Breast epithelium (tissue), 4 donors: ENCODE measurements at regions of chr9 and their contacts with region 1.

Region 1: GRCh38 chr9:33297432-33297831 is 7.1 kb downstream of the NFX1 start:
- DNase-seq: no peak
- H3K4me3 ChIP-seq: no peak overlapping the region
- H3K27ac ChIP-seq: no peak overlapping the region
- H3K4me1 ChIP-seq: peaks cover 0 to 23% of the 10 kb centered on the region in 2 donors
- H3K27me3 ChIP-seq: no peaks in the 10 kb centered on the region
- CTCF ChIP-seq: no peak
- POLR2A ChIP-seq: no peak

Region 2: DNA sequence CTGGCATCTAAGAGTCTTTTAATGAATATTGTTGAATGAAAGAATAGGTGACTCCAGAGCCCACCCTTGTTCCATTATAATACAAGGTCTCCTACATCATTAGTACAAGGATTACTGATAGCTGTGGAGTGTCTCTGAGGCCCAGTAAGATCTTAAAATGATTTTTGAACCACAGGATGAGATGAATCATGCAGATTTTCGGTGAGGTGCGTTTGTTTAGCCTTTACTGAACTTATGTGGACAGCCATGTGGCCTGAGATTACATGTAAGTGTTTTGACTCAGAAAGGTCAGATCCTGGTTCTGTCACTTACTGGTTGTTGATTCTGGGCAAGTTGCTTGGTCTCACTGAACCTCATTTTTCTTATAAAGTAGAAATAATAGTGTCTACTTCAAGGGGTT is 14.5 kb after region 1 on chr9:
- intact Hi-C with region 1: loop called (anchors 2 kb)
- DNase-seq: no peak
- H3K4me3 ChIP-seq: no peak overlapping the region
- H3K27ac ChIP-seq: no peak overlapping the region
- H3K4me1 ChIP-seq: no peaks in the 10 kb centered on the region
- H3K27me3 ChIP-seq: no peaks in the 10 kb centered on the region
- CTCF ChIP-seq: no peak
- POLR2A ChIP-seq: no peak

Region 3: GRCh38 chr9:33884856-33885701 is 587.6 kb after region 1 on chr9:
- intact Hi-C with region 1: no loop called
- DNase-seq: no peak
- H3K4me3 ChIP-seq: no peak overlapping the region
- H3K27ac ChIP-seq: no peak overlapping the region
- H3K4me1 ChIP-seq: peaks cover 0 to 5% of the 10 kb centered on the region in 2 donors
- H3K27me3 ChIP-seq: no peaks in the 10 kb centered on the region
- CTCF ChIP-seq: no peak
- POLR2A ChIP-seq: no peak

Region 4: DNA sequence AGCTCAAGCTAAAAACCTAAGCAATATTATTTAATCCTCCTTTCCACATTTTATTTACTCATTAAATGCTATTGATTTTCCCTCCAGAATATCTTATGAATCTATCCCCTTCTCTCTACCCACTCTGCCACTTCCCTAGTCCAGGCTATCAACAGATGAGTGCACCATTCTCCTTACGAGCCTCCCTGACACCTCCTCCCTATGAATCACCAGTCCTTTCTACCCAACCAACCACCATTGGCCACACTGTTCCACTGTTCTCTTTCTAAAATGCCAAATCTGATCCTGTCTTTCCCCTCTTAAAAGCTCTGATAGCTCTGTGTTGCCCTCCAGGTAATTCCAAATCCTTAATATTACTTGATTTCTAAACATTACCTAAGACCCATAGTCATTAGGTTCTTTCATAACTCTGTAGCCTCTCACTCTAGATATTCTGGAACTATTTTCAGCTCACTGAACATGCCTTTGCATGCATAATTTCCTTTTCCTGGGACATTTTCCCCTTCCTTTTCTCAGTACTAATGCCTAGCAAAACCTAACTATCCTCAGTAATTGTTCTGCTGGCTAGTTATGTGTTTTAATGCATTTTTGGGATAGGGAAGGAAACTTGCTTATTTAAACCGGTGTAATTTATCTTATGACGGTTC is 1990.7 kb after region 1 on chr9:
- intact Hi-C with region 1: no loop called
- DNase-seq: no peak
- H3K4me3 ChIP-seq: no peak overlapping the region
- H3K27ac ChIP-seq: no peak overlapping the region
- H3K4me1 ChIP-seq: no peaks in the 10 kb centered on the region
- H3K27me3 ChIP-seq: no peaks in the 10 kb centered on the region
- CTCF ChIP-seq: no peak
- POLR2A ChIP-seq: no peak